Activated CD4-positive, alpha-beta T cell treated with anti-CD3 and anti-CD28 coated beads for 36 hours (primary cell): ENCODE measurements at regions of chr4 and their contacts with region 1.

Region 1: GRCh38 chr4:36081185-36081584 is 163.1 kb downstream of the ARAP2 start:
- DNase-seq: peak; percentile 29
- ATAC-seq: peak; percentile 97
- H3K4me3 Mint-ChIP-seq: no peak overlapping the region
- H3K27ac Mint-ChIP-seq: no peak overlapping the region
- H3K4me1 Mint-ChIP-seq: peaks cover 5% of the 10 kb centered on the region
- H3K27me3 Mint-ChIP-seq: no peaks in the 10 kb centered on the region

Region 2: GRCh38 chr4:35970366-35970960 is 110.7 kb before region 1 on chr4:
- CTCF ChIA-PET with region 1: no interaction called
- POLR2A ChIA-PET with region 1: no interaction called
- intact Hi-C with region 1: loop called (anchors 1 kb)
- DNase-seq: peak; percentile 42
- ATAC-seq: peak; percentile 81
- H3K4me3 Mint-ChIP-seq: no peak overlapping the region
- H3K27ac Mint-ChIP-seq: no peak overlapping the region
- H3K4me1 Mint-ChIP-seq: peaks cover 10% of the 10 kb centered on the region
- H3K27me3 Mint-ChIP-seq: peaks cover 6% of the 10 kb centered on the region

Region 3: DNA sequence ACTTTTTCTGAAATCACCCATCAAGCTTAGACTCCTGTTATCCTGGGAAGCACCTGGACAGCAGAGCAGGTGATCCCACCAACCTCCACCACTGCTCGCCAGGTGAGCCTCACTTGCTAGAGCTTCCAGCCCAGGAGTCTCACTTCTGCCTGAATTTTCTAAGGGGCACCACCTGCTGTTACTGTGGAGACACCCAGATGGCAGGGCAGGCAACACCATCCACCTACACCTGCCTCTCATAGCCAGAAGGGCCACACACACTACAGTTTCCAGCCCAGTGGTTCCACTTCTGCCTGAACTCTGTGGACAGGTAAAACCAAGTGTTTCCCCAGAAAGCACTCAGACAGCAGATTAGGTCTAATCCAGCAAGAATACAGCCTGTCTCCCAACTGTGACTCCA is 98.9 kb before region 1 on chr4:
- CTCF ChIA-PET with region 1: no interaction called
- POLR2A ChIA-PET with region 1: no interaction called
- intact Hi-C with region 1: no loop called
- DNase-seq: no peak
- ATAC-seq: no peak
- H3K4me3 Mint-ChIP-seq: no peak overlapping the region
- H3K27ac Mint-ChIP-seq: no peak overlapping the region
- H3K4me1 Mint-ChIP-seq: peaks cover 7% of the 10 kb centered on the region
- H3K27me3 Mint-ChIP-seq: peaks cover 3% of the 10 kb centered on the region